Activated T-helper 2 cell treated with anti-CD3 and anti-CD28 coated beads, Interferon-gamma antibody, Interleukin-2, Interleukin-4, amounts not matched to agents 10 μg/mL and 5 μg/mL and 100 μg/mL, durations not matched to agents 14 hours and 24 hours and 36 hours (primary cell): ENCODE measurements at regions of chr10 and their contacts with region 1.

Region 1: GRCh38 chr10:69408318-69409175 is 8.2 kb downstream of the TACR2 start:
- DNase-seq: peak; percentile 82
- H3K4me3 Mint-ChIP-seq: peak overlapping the region; percentile 76
- H3K27ac Mint-ChIP-seq: peak overlapping the region; percentile 86
- H3K4me1 Mint-ChIP-seq: peaks cover 9% of the 10 kb centered on the region
- H3K27me3 Mint-ChIP-seq: no peaks in the 10 kb centered on the region

Region 2: GRCh38 chr10:69237528-69238159 is 170.9 kb before region 1 on chr10:
- intact Hi-C with region 1: loop called (anchors 5 kb)
- DNase-seq: peak; percentile 77
- H3K4me3 Mint-ChIP-seq: no peak overlapping the region
- H3K27ac Mint-ChIP-seq: no peak overlapping the region
- H3K4me1 Mint-ChIP-seq: peaks cover 9% of the 10 kb centered on the region
- H3K27me3 Mint-ChIP-seq: no peaks in the 10 kb centered on the region

Region 3: GRCh38 chr10:69306421-69306820 is 102.1 kb before region 1 on chr10:
- intact Hi-C with region 1: no loop called
- DNase-seq: no peak
- H3K4me3 Mint-ChIP-seq: no peak overlapping the region
- H3K27ac Mint-ChIP-seq: no peak overlapping the region
- H3K4me1 Mint-ChIP-seq: peaks cover 5% of the 10 kb centered on the region
- H3K27me3 Mint-ChIP-seq: peaks cover 2% of the 10 kb centered on the region

Region 4: GRCh38 chr10:69506834-69507721 is 98.5 kb after region 1 on chr10:
- intact Hi-C with region 1: loop called (anchors 5 kb)
- DNase-seq: no peak
- H3K4me3 Mint-ChIP-seq: peak overlapping the region; percentile 57
- H3K27ac Mint-ChIP-seq: no peak overlapping the region
- H3K4me1 Mint-ChIP-seq: peaks cover 9% of the 10 kb centered on the region
- H3K27me3 Mint-ChIP-seq: peaks cover 23% of the 10 kb centered on the region